Activated B cell treated with CpG ODN at 0.5 μM for 24 hours (primary cell): ENCODE measurements at regions of chr3 and their contacts with region 1.

Region 1: DNA sequence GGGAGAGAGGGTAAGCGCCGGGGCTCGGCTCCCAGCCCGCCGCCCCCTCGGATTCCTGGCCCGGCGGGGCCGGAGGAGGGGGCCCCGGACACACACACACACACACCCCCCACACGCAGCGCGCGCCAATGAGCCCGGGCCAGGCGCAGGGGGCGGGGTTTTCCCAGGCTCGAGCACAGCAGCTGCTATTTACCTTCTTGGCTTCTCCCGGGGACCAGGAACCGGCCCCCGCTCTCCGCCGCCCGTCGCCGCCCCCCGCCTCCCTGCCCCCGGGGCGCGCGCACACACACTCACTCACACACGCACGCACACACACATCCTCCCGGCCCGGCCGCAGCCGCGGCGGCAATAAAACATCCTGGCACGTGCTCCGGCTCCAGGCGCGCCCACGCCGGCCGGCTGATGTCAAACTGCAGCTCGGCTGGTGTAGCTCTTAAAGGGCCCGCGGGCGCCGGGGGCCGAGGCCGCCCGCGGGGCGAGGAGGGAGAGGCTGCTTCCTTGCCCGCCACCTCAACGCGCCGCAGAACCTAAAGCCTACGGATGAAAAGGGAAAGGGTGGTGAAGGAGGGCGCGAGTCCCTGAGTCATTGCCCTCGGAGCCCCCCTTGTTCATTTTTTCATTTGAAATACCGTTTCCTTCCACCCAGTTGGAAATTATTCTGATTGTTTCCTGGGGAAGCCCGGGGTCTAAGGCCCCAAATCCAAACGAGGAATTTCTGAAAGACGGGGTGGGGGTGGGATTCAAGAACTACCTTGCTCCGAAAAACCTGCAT is 1.0 kb upstream of the HES1 start:
- DNase-seq: peak; percentile 82
- ATAC-seq: peak; percentile 37
- H3K4me3 Mint-ChIP-seq: peak overlapping the region; percentile 92
- H3K27ac Mint-ChIP-seq: peak overlapping the region; percentile 96
- H3K4me1 Mint-ChIP-seq: peaks cover 78% of the 10 kb centered on the region
- H3K27me3 Mint-ChIP-seq: peaks cover 1% of the 10 kb centered on the region
- CTCF ChIP-seq: no peak

Region 2: GRCh38 chr3:193665370-193665989 is 469.5 kb before region 1 on chr3:
- CTCF ChIA-PET with region 1: interaction called, 41 read pairs
- POLR2A ChIA-PET with region 1: no interaction called
- intact Hi-C with region 1: loop called (anchors 1 kb)
- DNase-seq: no peak
- ATAC-seq: no peak
- H3K4me3 Mint-ChIP-seq: no peak overlapping the region
- H3K27ac Mint-ChIP-seq: no peak overlapping the region
- H3K4me1 Mint-ChIP-seq: peaks cover 6% of the 10 kb centered on the region
- H3K27me3 Mint-ChIP-seq: no peaks in the 10 kb centered on the region
- CTCF ChIP-seq: peak; percentile 95

Region 3: GRCh38 chr3:193831495-193832455 is 303.2 kb before region 1 on chr3:
- CTCF ChIA-PET with region 1: no interaction called
- POLR2A ChIA-PET with region 1: interaction called, 3 read pairs
- intact Hi-C with region 1: loop called (anchors 1 kb)
- DNase-seq: no peak
- ATAC-seq: peak; percentile 85
- H3K4me3 Mint-ChIP-seq: peak overlapping the region; percentile 48
- H3K27ac Mint-ChIP-seq: peak overlapping the region; percentile 87
- H3K4me1 Mint-ChIP-seq: peaks cover 40% of the 10 kb centered on the region
- H3K27me3 Mint-ChIP-seq: peaks cover 4% of the 10 kb centered on the region
- CTCF ChIP-seq: no peak

Region 4: DNA sequence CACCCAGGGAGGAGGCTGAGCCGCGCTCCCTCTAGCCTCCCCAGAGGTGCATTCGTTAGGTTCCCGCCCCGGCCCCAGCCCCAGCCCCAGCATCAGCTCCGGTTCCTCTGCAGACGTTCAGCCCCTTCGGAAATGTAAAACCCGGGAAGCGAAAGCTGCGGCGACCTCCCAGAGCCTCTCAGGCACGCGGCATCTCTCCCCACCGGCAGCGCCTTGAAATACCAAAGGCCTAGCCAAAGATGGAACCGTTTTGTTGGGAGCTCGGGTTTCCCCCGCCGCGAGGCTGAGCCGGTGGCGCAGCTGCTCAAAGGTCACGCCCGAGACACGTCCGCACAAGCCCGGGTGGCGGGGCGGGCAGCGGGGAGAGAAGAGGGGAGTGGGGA is 76.8 kb before region 1 on chr3:
- CTCF ChIA-PET with region 1: interaction called, 4 read pairs
- POLR2A ChIA-PET with region 1: interaction called, 11 read pairs
- intact Hi-C with region 1: loop called (anchors 5 kb)
- DNase-seq: peak; percentile 34
- ATAC-seq: peak; percentile 78
- H3K4me3 Mint-ChIP-seq: peak overlapping the region; percentile 80
- H3K27ac Mint-ChIP-seq: peak overlapping the region; percentile 53
- H3K4me1 Mint-ChIP-seq: peaks cover 20% of the 10 kb centered on the region
- H3K27me3 Mint-ChIP-seq: no peaks in the 10 kb centered on the region
- CTCF ChIP-seq: no peak

Region 5: DNA sequence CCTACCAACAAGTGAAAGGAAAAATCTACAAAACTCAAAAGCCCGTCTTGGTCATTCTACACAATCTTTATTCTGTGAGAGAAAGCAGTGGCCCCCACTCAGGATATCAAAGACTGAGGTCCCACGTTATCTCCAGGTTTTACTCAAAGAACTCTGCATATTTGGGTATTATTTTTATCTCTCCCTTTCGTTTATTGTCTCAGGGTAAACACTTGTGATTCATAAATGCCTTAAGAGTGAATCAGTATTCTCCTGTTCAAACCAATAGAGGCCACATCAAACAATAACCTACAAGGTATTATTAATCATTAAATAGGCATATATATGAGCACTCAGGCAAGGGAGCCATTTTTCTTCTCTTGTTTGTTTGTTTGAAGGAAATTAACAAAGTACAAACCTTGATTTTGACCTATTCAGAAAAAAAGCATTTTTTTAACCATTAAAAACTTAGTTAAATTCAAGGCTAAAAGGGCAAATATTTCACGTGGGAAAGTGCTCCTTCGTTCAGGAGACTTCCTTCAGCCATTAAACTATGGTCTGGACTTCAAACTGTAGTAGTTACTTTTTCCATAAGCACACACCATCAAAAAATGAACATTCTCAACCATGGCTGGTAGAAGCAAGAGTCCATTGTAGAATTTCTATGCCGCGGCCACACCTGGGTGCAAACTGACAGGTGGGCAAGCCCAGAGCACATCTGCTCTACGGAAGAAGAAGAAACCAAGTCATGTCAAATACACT is 12.9 kb before region 1 on chr3:
- CTCF ChIA-PET with region 1: interaction called, 3 read pairs
- POLR2A ChIA-PET with region 1: interaction called, 5 read pairs
- intact Hi-C with region 1: loop called (anchors 1 kb)
- DNase-seq: no peak
- ATAC-seq: no peak
- H3K4me3 Mint-ChIP-seq: no peak overlapping the region
- H3K27ac Mint-ChIP-seq: no peak overlapping the region
- H3K4me1 Mint-ChIP-seq: peaks cover 29% of the 10 kb centered on the region
- H3K27me3 Mint-ChIP-seq: no peaks in the 10 kb centered on the region
- CTCF ChIP-seq: no peak

Region 6: GRCh38 chr3:194486540-194487288 is 351.8 kb after region 1 on chr3 and contains the start of gene ATP13A3:
- CTCF ChIA-PET with region 1: no interaction called
- POLR2A ChIA-PET with region 1: no interaction called
- intact Hi-C with region 1: loop called (anchors 10 kb)
- DNase-seq: peak; percentile 86
- ATAC-seq: peak; percentile 75
- H3K4me3 Mint-ChIP-seq: peak within 1 kb of the TSS; percentile 91
- H3K27ac Mint-ChIP-seq: peak within 1 kb of the TSS; percentile 88
- H3K4me1 Mint-ChIP-seq: peaks cover 63% of the 10 kb centered on the region
- H3K27me3 Mint-ChIP-seq: no peaks in the 10 kb centered on the region
- CTCF ChIP-seq: no peak
- total RNA-seq, gene ATP13A3: 79.8 and 91.9 TPM in 2 replicates